A673 (cell line): ENCODE measurements at regions of chr20 and their contacts with region 1.

Region 1: DNA sequence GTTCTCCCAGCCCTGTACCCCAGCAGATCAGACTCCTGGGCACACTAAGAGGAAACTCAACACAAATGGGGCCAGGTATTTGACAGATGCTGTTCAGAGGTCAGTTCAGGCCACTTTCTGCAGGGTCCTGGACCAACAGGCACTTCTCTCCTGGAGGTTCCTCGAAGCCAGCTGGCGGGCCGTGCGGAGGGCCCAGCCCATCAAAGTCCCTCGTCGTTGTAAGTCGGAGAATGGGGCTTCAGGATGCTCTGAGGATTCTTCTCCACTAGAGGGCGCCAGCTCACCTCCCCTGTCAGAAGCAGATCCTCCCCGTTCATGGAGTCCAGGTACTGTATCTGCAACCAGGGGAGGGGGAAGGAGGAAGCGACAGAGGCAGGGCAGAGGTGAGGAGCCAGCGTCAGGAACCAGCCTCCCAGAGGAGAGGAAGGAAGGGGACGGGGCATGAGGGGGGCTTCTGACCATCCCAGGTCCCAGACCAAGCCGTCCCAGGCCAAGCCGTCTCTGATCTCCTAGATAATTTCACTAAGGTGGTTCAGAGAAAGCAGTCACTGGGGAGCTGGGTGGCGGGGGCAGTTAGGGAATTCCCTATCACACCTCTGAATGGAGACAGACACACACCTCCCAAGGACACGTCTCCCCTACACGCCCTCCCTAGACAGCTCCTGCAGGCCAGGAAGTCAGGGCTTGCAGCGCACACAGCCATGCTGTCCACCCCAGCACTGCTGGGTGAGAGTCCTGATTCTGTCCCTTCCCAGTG is 11.7 kb upstream of the FAM83C start:
- DNase-seq: peak; percentile 86
- H3K4me3 ChIP-seq: no peak overlapping the region
- H3K27ac ChIP-seq: no peak overlapping the region
- H3K4me1 ChIP-seq: no peaks in the 10 kb centered on the region
- H3K27me3 ChIP-seq: no peaks in the 10 kb centered on the region
- CTCF ChIP-seq: peak; percentile 95

Region 2: DNA sequence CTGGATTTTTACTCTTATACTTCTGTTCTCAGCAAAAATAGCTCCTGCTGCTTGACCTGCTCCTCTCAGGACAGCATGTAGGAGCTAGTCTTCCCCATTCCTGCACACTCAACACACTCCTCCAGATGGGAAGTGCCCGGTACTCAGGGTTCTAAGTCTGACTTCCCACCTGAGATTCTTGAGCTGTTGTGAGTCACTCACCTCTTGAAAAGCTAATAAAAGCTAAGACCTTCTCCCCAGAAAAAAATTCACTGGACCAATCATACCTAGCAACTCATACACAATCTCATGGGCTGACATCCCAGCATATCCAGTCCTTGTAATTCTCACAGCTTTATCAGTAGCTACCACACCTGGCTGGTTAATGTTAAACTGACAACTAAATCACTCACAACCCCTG is 264.8 kb before region 1 on chr20:
- CTCF ChIA-PET with region 1: interaction called, 12 read pairs
- POLR2A ChIA-PET with region 1: no interaction called
- intact Hi-C with region 1: no loop called
- DNase-seq: no peak
- H3K4me3 ChIP-seq: no peak overlapping the region
- H3K27ac ChIP-seq: no peak overlapping the region
- H3K4me1 ChIP-seq: no peaks in the 10 kb centered on the region
- H3K27me3 ChIP-seq: no peaks in the 10 kb centered on the region
- CTCF ChIP-seq: no peak

Region 3: GRCh38 chr20:35434067-35435005 is 130.4 kb after region 1 on chr20:
- CTCF ChIA-PET with region 1: interaction called, 5 read pairs
- POLR2A ChIA-PET with region 1: no interaction called
- intact Hi-C with region 1: loop called (anchors 5 kb)
- DNase-seq: no peak
- H3K4me3 ChIP-seq: no peak overlapping the region
- H3K27ac ChIP-seq: no peak overlapping the region
- H3K4me1 ChIP-seq: peaks cover 7% of the 10 kb centered on the region
- H3K27me3 ChIP-seq: no peaks in the 10 kb centered on the region
- CTCF ChIP-seq: no peak

Region 4: DNA sequence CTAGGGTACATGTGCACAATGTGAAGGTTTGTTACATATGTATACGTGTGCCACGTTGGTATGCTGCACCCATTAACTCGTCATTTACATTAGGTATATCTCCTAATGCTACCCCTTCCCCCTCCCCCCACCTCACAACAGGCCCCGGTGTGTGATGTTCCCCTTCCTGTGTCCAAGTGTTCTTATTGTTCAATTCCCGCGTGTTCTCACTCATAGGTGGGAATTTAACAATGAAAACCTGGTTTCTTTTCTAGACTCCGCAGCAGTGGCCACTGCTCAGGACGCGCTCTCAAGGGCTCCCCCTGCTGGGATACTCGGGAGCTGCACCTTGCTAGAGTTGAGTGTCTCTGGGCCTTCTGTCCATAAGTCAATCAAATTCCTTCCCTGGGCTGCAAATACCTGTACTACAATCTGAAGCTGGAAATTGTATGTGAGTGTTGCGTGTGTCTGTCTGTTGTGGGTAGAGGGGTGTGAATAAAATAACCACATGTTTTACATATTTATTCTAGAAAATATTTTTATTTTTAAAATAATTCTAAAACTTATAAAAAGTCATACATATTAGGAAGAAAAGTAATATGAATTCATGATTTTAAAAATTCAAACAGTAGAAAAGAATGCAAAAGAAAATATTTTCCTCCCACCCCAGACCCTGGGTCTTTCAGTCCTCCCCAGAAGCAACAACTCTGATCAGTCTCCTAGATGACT is 143.3 kb after region 1 on chr20:
- CTCF ChIA-PET with region 1: no interaction called
- POLR2A ChIA-PET with region 1: no interaction called
- intact Hi-C with region 1: loop called (anchors 5 kb)
- DNase-seq: peak; percentile 89
- H3K4me3 ChIP-seq: peak overlapping the region; percentile 46
- H3K27ac ChIP-seq: no peak overlapping the region
- H3K4me1 ChIP-seq: peaks cover 8% of the 10 kb centered on the region
- H3K27me3 ChIP-seq: no peaks in the 10 kb centered on the region
- CTCF ChIP-seq: peak; percentile 91